ENCODE measurements at regions of chr1 and their contacts with region 1.

Region 1: GRCh38 chr1:19811206-19811851 is 3.8 kb downstream of the RNF186 start:
- DNase-seq: peak; percentile 68
- H3K4me3 Mint-ChIP-seq: no peak overlapping the region
- H3K27ac Mint-ChIP-seq: no peak overlapping the region
- H3K4me1 Mint-ChIP-seq: no peaks in the 10 kb centered on the region
- H3K27me3 Mint-ChIP-seq: peaks cover 34% of the 10 kb centered on the region

Region 2: DNA sequence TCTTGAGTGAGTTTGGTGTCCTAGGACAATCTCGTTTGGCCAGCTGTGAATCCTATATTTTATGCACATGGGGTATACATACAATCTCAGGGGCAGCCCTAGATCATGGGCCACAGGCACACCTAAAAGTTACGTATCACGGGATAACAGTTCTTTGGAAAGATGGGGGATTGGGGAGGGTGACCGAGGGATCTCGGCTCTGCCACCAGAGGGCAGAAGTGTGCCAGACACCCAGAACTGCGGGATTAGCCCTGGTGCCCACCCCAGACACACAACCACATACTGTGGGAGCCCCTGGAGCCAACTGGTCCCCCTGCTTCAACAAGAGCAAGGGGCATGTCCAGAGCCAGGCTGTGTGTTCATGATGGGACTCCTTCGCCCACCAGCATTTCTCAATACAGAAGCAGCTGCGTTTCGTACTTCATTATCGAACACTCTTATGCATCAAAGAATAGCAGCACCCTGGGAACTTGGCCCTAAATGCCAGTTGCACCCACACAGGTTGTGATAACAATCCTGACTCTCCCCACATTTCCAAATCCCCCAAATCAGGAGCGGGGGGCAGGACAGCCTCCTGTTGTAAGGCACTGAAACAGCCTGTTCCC is 49.1 kb before region 1 on chr1:
- CTCF ChIA-PET with region 1: interaction called, 17 read pairs
- DNase-seq: peak; percentile 47
- H3K4me3 Mint-ChIP-seq: no peak overlapping the region
- H3K27ac Mint-ChIP-seq: no peak overlapping the region
- H3K4me1 Mint-ChIP-seq: peaks cover 14% of the 10 kb centered on the region
- H3K27me3 Mint-ChIP-seq: no peaks in the 10 kb centered on the region

Measured in activated naive CD4-positive, alpha-beta T cell treated with anti-CD3 and anti-CD28 coated beads, Interleukin-2, amount 10 ng/mL, durations not matched to agents 7 days and 5 days (primary cell).